Cardiac septum (tissue), 1 donor: ENCODE measurements at regions of chr1 and their contacts with region 1.

Region 1: DNA sequence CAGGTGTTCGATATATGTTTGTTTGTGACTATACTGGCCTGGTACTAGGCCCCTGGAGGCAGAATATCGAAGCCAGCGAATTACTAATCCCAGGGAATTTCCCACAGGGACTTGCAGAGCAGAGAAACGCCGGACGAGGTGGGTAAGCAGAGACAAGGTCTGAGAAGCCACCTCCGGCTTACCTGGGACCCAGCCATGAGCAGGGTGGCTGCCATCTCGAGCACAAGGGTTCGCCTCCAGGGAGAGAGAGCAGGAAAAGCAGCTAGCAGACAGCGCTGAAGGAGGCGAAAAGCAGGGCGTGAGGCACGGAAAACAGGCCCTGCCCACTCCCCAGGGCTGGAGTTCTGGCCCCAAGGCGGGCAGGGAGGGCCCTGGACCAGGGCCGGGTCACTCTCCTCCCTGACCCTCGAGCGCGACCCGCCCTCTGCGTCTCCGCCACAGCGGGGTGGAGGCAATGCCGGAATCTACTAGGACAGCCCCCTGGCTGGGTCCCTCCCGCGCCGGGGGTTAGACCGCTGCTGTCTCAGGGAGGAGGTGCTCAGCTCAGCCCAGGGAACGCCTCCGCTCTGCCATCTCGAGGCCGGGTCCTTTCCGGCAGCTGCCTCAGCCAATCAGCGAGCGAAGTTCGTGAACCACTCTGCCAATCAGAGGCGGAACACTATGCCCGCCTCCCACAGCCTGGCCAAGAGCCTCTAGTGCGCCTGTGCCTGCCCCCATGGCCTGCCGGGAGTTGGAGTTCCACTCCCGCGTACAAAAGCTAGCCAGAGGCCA is 1.7 kb downstream of the ZNF436 start:
- DNase-seq: peak; percentile 100

Region 2: GRCh38 chr1:23303524-23303923 is 64.5 kb before region 1 on chr1:
- intact Hi-C with region 1: no loop called
- DNase-seq: no peak

Region 3: GRCh38 chr1:23344111-23344986 is 23.6 kb before region 1 on chr1 and contains the start of gene HNRNPR:
- intact Hi-C with region 1: loop called (anchors 1 kb)
- DNase-seq: peak; percentile 100
- total RNA-seq, gene HNRNPR: 67.3 TPM

Region 4: GRCh38 chr1:23394684-23395083 is 26.7 kb after region 1 on chr1:
- intact Hi-C with region 1: loop called (anchors 2 kb)
- DNase-seq: peak; percentile 89

Region 5: GRCh38 chr1:23403735-23404486 is 35.9 kb after region 1 on chr1:
- intact Hi-C with region 1: loop called (anchors 2 kb)
- DNase-seq: peak; percentile 94

Region 6: GRCh38 chr1:23484253-23485001 is 116.5 kb after region 1 on chr1:
- intact Hi-C with region 1: loop called (anchors 5 kb)
- DNase-seq: peak; percentile 95